GM10248 (cell line): ENCODE measurements at regions of chr19 and their contacts with region 1.

Region 1: DNA sequence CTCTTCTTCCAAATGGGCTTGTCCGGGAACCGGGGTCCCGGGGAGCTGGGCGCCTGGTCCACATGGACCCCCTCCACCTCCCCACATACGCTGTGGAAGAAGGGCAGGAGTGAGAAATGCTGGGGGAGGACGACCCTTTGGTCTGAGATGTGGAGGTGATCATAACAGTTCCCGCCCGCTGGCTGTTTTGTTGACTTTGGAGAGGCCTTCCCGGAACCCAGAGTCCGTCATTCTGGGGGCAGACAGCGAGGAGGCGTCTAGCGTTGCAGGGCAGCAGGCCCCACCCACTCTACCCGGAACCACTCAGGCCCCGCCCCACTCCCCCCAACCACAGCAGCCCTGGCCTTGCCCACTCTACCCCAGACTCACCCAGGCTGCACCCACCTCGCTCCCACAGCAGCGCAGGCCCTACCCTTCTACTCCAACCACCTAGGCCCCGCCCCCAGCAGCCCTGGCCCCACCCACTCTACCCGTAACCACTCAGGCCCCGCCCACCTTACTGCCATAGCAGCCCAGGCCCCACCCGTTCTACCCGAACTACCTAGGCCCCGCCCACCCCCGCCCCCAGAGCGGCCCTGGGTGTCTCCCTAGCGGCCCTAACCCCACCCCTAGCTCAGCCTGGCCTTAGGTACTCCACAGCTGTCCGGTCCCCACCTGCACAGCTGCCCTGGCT is 7.1 kb downstream of the GPR108 start:
- DNase-seq: no peak
- CTCF ChIP-seq: no peak

Region 2: DNA sequence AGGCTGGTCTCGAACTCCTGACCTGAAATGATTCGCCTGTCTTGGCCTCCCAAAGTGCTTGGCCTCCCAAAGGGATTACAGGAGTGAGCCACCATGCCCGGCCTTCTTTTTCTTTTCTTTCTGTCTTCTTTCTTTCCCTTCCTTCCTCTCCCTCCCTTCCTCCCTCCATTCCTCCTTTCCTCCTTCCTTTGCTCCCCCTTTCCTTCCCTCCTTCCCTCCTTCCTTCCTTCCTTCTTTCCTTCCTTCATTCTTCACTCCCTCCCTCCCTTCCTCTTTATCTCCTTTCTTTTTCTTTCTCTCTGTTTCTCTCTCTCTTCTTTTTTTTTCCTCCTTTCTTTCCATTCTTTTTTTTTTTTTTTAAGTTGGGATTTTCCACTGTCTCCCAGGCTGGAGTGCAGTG is 21.9 kb before region 1 on chr19:
- CTCF ChIA-PET with region 1: interaction called, 3 read pairs
- POLR2A ChIA-PET with region 1: interaction called, 13 read pairs
- DNase-seq: no peak
- CTCF ChIP-seq: no peak